ENCODE measurements at regions of chr22 and their contacts with region 1.

Region 1: DNA sequence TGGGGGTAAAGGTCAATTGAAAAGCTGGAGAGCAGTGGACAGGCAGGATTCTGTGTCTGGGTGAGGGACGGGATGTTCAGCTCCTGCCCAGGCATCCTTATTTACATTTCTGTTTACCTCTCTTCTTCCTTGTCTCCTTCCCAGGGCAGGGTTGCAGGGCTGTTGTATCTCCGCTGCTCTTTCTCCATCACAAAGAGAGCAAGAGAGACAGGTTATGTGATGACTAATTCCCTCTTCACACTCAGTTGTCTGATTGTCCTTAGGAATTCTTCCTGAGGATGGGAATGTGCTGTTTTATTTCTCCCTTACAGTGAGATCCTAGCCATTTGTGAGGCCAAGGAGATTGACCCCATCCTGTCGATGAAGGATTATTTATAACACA is 104.9 kb downstream of the VPREB1 start:
- DNase-seq: no peak

Region 2: GRCh38 chr22:22076932-22077703 is 272.3 kb before region 1 on chr22:
- intact Hi-C with region 1: no loop called
- DNase-seq: no peak

Region 3: DNA sequence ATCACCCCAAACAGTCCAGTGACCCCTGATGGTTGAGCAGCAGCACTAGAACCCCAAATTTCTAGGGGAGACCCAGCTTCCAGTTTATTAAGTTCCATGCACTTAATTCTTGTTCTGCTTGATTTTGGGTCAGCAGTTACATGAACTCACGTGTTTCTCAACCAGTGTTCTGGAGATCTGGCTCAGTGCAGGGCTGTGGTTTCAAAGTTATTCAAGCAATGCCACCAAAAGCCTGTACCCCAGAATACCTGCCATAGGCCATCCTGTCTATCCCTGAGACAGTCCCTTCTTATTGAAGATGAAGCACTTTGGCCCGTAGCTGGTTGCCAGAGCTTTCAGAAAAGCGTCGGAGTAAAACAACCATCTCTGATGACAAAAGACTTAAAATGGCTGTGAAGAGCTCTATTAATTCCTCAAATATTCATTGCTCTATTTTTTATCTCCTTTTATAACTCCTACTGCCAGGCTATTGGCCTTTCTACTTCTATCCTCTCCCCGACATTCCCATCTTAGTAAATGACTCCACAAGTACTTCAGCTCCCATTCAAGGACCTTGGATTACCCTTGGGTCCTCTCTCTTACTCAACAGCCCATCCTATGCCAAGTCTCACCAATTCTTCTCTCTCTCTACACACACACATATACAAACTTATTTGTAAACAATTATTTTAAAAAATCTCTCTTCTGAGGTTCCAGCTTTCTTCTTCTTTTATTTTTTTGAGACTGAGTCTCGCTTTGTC is 122.8 kb before region 1 on chr22:
- intact Hi-C with region 1: no loop called
- DNase-seq: no peak

Region 4: GRCh38 chr22:22397277-22397870 is 47.9 kb after region 1 on chr22:
- intact Hi-C with region 1: loop called (anchors 1 kb)
- DNase-seq: no peak

Region 5: GRCh38 chr22:22855617-22856308 is 506.3 kb after region 1 on chr22:
- intact Hi-C with region 1: no loop called
- DNase-seq: no peak

Measured in cardiac septum (tissue), 1 donor.